ENCODE measurements at regions of chr1 and their contacts with region 1.

Region 1: GRCh38 chr1:15835741-15836510 is 11.6 kb upstream of the SPEN start:
- DNase-seq: peak; percentile 97 to 100 (median 98)

Region 2: GRCh38 chr1:15788624-15789301 is 47.2 kb before region 1 on chr1:
- intact Hi-C with region 1: no loop called
- DNase-seq: no peak

Region 3: GRCh38 chr1:15820478-15820877 is 15.4 kb before region 1 on chr1:
- intact Hi-C with region 1: no loop called
- DNase-seq: no peak

Region 4: GRCh38 chr1:15847100-15847892 is 11.4 kb after region 1 on chr1 and contains the start of gene SPEN:
- intact Hi-C with region 1: loop called (anchors 1 kb)
- DNase-seq: peak; percentile 92 to 100 (median 98)

Region 5: GRCh38 chr1:15885701-15886610 is 50.0 kb after region 1 on chr1:
- intact Hi-C with region 1: loop called (anchors 5 kb)
- DNase-seq: peak; percentile 90 to 99 (median 96)

Region 6: GRCh38 chr1:15937706-15938168 is 101.8 kb after region 1 on chr1:
- intact Hi-C with region 1: no loop called
- DNase-seq: peak in 3 of 10 donors; percentile 15 to 87 (median 81)

Region 7: DNA sequence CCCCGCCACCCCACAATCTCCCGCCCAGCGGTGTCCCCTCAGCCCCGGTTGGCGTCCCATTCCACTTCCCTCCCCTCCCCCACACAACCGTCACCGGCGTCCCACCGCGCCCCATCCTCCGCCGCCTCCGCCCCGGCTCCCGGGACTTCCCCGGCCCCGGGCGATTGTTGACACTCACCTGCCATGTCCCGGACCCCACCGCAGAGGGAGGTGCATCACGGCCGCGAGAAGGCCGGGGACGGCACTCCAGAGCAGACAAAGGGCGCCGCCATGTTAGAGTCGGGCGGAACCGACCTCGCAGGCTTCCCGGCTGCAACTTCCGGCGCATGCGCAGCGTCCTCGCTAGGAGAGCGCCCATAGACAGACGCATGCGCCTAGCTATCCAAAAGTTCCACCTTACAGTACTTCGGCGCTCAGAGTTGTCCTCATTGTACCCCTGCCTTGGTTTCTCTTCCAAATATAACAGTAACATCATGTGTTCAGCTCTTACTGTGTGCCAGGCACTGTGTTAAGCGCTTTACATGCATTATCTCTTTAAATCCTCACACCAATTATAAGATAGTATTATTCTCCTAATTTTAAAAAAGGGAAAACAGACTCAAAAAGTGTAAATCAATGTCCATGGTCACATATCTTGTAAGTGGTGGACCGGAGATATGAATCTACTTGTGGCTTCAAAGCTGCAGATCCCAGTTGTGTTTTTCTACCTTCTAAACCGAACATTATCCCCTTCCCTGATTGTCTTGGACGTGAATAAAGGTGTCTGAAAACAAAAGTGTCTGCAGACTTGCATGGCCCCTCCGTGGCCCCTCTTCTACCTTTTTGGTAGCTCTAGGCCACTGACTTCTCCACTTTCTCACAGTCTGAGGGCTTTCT is 140.1 kb after region 1 on chr1 and contains the start of gene ZBTB17:
- intact Hi-C with region 1: loop called (anchors 10 kb)
- DNase-seq: peak; percentile 80 to 98 (median 88)

Measured in posterior cingulate gyrus (tissue), 11 donors.